HepG2 (cell line): ENCODE measurements at regions of chr1 and their contacts with region 1.

Region 1: DNA sequence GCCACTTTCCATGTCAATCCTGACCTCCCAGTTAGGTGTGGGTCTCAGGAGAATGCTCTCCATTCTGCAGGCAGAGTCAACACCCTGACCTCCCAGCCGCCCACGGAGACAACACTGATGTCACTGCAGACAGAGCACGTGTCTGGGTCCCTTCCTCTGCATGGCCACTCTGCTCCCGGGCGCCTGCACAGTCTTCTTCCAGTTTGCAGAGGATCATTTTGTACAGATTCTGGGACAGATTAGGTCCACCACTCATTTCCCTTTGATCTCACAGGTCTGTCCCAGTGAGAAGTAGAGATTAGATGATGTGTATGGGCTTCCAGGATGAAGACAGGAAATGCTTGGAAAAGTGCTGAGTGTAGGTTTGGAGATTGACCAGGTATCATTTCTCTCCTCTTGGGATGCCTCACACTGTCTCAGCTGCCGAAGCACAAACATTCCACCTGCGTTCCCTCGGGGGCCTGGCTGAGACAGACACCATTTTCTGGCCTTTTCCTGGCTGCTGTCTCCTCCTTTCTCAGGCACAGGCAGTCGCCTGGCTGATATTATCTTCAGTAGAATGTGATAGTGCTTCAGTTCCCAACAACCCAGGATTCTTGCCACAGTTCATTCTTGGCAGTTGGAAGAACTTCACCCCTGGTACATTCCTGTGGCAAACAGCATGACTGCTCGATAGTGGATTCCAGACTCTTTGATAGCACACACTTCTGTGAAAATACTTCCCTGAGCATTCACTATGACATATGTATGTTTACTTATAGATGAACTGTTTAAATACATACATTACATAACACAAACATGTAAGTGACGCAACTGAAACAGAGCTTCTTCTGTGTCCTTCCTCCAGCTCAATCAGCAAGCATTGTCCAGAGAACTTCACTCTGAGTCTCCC is 7.9 kb downstream of the MYBPHL start:
- DNase-seq: peak; percentile 98
- ATAC-seq: peak; percentile 85
- H3K4me3 ChIP-seq: peak overlapping the region in 2 of 3 experiments; percentile 6 to 65; a peak in 1 of 6 replicates
- H3K27ac ChIP-seq: peak overlapping the region; percentile 96
- H3K4me1 ChIP-seq: peaks cover 51% of the 10 kb centered on the region
- H3K27me3 ChIP-seq: no peaks in the 10 kb centered on the region
- CTCF ChIP-seq: no peak
- EP300 ChIP-seq: peak; percentile 90 to 94
- POLR2A ChIP-seq: peak in 1 of 2 experiments; percentile 48; a peak in 1 of 4 replicates
- RAD21 ChIP-seq: no peak; the same call in 1 of the 2 replicates

Region 2: DNA sequence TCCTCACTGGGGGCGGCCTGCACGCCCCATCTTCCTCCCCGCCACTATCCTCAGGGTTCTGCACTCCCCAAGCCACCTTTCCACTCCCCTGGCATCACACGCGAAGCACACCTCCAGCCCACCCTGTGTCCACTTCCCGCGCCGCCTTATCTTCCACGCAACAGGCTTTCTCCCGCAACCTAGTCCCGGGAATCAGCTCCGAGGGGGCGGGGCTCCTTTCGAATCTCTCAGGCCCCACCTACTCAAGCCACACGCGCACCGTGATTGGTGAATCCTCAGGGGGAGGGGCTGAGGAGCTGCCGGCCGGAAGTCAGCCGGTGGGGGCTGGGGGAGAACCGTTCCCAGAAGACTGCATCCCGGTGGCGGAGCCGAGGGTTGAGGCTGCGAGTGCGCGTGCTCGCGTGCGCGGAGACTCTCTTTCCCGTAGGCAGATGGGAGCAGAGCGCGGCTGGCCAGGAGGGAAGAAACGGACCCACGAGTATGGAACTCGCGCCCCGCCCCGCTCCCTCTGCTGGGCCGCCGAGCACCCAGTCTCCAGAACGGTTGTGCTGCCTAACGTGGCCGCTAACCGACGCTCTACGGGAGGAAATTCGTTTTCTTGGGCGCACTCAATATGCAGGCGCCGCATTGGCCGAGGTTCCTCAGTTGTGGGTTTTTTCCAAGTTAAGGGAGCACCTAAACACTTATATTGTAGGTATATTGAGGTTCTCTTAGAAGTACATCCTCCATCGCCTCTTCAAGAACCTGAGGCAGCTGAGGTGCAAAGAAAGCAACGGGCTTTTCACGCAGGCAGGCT is 15.8 kb before region 1 on chr1 and contains the start of gene PSRC1:
- CTCF ChIA-PET with region 1: no interaction called
- POLR2A ChIA-PET with region 1: interaction called, 28 read pairs
- in situ Hi-C with region 1: no loop called
- intact Hi-C with region 1: loop called (anchors 1 kb)
- DNase-seq: peak; percentile 90
- ATAC-seq: peak; percentile 95
- H3K4me3 ChIP-seq: peak within 1 kb of the TSS; percentile 75 to 99 (median 93)
- H3K27ac ChIP-seq: peak within 1 kb of the TSS; percentile 85
- H3K4me1 ChIP-seq: peaks cover 52% of the 10 kb centered on the region
- H3K27me3 ChIP-seq: no peaks in the 10 kb centered on the region; a peak in 1 of 5 replicates
- CTCF ChIP-seq: peak; percentile 59
- EP300 ChIP-seq: 0 out of 4 replicates have a peak, but pooled peaks of 1 of the 2 experiments have one; percentile 10
- POLR2A ChIP-seq: peak; percentile 79 to 92
- RAD21 ChIP-seq: peak; percentile 73
- total RNA-seq, gene PSRC1: 26.5 and 28.6 TPM in 2 replicates

Region 3: GRCh38 chr1:109341944-109342930 is 43.3 kb after region 1 on chr1:
- CTCF ChIA-PET with region 1: no interaction called
- POLR2A ChIA-PET with region 1: interaction called, 3 read pairs
- in situ Hi-C with region 1: no loop called
- intact Hi-C with region 1: loop called (anchors 1 kb)
- DNase-seq: no peak
- ATAC-seq: no peak
- H3K4me3 ChIP-seq: no peak overlapping the region
- H3K27ac ChIP-seq: no peak overlapping the region
- H3K4me1 ChIP-seq: peaks cover 23% of the 10 kb centered on the region
- H3K27me3 ChIP-seq: no peaks in the 10 kb centered on the region
- CTCF ChIP-seq: no peak
- EP300 ChIP-seq: no peak
- POLR2A ChIP-seq: no peak
- RAD21 ChIP-seq: no peak

Region 4: GRCh38 chr1:109361649-109362048 is 62.7 kb after region 1 on chr1:
- CTCF ChIA-PET with region 1: no interaction called
- POLR2A ChIA-PET with region 1: no interaction called
- in situ Hi-C with region 1: no loop called
- intact Hi-C with region 1: no loop called
- DNase-seq: no peak
- ATAC-seq: no peak
- H3K4me3 ChIP-seq: no peak overlapping the region
- H3K27ac ChIP-seq: no peak overlapping the region
- H3K4me1 ChIP-seq: peaks cover 29% of the 10 kb centered on the region
- H3K27me3 ChIP-seq: no peaks in the 10 kb centered on the region
- CTCF ChIP-seq: no peak
- EP300 ChIP-seq: no peak
- POLR2A ChIP-seq: no peak
- RAD21 ChIP-seq: no peak